ENCODE measurements at regions of chr2 and their contacts with region 1.

Region 1: GRCh38 chr2:197310271-197310985 is at the start of gene ANKRD44:
- DNase-seq: peak in 1 of 2 donors; percentile 95
- H3K4me3 ChIP-seq: peak within 1 kb of the TSS; percentile 76 to 85
- H3K27ac ChIP-seq: peak within 1 kb of the TSS; percentile 89
- H3K4me1 ChIP-seq: peaks cover 43% of the 10 kb centered on the region
- H3K27me3 ChIP-seq: no peaks in the 10 kb centered on the region
- CTCF ChIP-seq: peak in 1 of 3 experiments; percentile 49
- POLR2A ChIP-seq: peak in 1 of 2 donors; percentile 56
- total RNA-seq, gene ANKRD44: 46.4 TPM

Region 2: DNA sequence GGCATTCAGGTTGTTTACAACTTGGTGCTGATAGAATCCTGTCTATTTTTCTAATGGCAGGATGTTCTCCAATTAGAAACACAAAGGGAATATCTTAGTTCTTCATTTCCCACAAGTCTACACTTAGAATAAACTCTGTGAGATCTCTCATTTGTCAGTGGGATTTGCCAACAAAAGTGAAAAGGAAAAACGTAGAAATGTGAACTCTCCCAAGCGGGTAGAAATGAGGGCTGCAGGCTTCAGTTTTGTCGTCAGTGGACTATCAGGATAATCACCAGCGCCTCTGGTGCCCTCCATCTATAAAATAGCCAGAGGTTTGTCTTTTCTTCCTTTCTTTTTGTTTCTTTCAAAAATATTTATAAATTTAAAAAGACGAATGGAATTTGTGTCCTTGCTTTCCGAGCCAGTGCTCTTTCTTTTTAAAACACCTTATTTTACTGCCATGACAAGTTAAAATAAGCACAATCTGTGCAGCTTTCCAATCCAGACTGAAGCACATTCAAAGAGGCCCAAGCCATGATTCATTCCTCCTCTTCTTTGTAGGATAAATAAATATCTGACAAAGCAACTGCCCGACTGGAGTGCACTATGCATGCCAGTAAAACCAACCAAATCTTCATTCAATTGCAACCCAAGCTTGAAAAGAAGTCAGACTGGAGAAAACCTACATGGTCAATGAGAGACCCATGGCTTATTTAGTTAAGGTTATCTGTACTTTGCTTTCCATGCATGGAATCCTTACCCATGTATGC is 185.6 kb before region 1 on chr2:
- intact Hi-C with region 1: loop called (anchors 10 kb)
- DNase-seq: no peak
- H3K4me3 ChIP-seq: no peak overlapping the region
- H3K27ac ChIP-seq: no peak overlapping the region
- H3K4me1 ChIP-seq: no peaks in the 10 kb centered on the region
- H3K27me3 ChIP-seq: no peaks in the 10 kb centered on the region
- CTCF ChIP-seq: no peak
- POLR2A ChIP-seq: no peak

Region 3: GRCh38 chr2:197191177-197191939 is 119.1 kb before region 1 on chr2:
- intact Hi-C with region 1: loop called (anchors 10 kb)
- DNase-seq: no peak
- H3K4me3 ChIP-seq: no peak overlapping the region
- H3K27ac ChIP-seq: no peak overlapping the region
- H3K4me1 ChIP-seq: peaks cover 38% of the 10 kb centered on the region
- H3K27me3 ChIP-seq: no peaks in the 10 kb centered on the region
- CTCF ChIP-seq: peak; percentile 13 to 59 (median 55)
- POLR2A ChIP-seq: no peak

Region 4: DNA sequence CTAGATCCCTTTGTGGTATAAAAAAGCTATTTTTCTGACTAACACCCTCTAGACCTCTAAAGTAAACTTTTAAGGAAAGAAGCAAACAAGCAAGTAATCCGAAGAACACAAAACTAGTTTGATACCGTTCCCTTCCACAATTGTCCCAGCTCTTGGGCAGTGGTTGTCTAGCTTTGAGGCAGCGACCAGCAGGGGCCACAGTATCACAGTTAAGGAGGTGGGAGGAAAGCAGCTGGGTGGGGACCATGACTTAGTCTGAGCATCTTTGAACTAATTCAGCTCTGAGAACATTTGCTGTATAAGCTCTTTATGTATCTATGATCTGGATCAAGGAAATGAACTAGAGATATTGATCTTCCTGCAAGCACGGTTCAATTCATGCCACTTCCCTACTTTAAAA is 73.4 kb after region 1 on chr2:
- intact Hi-C with region 1: no loop called
- DNase-seq: no peak
- H3K4me3 ChIP-seq: no peak overlapping the region
- H3K27ac ChIP-seq: no peak overlapping the region
- H3K4me1 ChIP-seq: peaks cover 3% of the 10 kb centered on the region
- H3K27me3 ChIP-seq: no peaks in the 10 kb centered on the region
- CTCF ChIP-seq: no peak
- POLR2A ChIP-seq: no peak

Region 5: GRCh38 chr2:197442857-197443256 is 132.4 kb after region 1 on chr2:
- intact Hi-C with region 1: no loop called
- DNase-seq: no peak
- H3K4me3 ChIP-seq: no peak overlapping the region
- H3K27ac ChIP-seq: no peak overlapping the region
- H3K4me1 ChIP-seq: no peaks in the 10 kb centered on the region
- H3K27me3 ChIP-seq: no peaks in the 10 kb centered on the region
- CTCF ChIP-seq: no peak
- POLR2A ChIP-seq: no peak

Measured in vagina (tissue), 2 donors.